ENCODE measurements at regions of chr13 and their contacts with region 1.

Region 1: GRCh38 chr13:21823949-21824348 is 153.1 kb downstream of the FGF9 start:
- DNase-seq: no peak
- H3K4me3 Mint-ChIP-seq: no peak overlapping the region
- H3K27ac Mint-ChIP-seq: no peak overlapping the region
- H3K4me1 Mint-ChIP-seq: peaks cover 18% of the 10 kb centered on the region
- H3K27me3 Mint-ChIP-seq: no peaks in the 10 kb centered on the region
- CTCF ChIP-seq: no peak

Region 2: DNA sequence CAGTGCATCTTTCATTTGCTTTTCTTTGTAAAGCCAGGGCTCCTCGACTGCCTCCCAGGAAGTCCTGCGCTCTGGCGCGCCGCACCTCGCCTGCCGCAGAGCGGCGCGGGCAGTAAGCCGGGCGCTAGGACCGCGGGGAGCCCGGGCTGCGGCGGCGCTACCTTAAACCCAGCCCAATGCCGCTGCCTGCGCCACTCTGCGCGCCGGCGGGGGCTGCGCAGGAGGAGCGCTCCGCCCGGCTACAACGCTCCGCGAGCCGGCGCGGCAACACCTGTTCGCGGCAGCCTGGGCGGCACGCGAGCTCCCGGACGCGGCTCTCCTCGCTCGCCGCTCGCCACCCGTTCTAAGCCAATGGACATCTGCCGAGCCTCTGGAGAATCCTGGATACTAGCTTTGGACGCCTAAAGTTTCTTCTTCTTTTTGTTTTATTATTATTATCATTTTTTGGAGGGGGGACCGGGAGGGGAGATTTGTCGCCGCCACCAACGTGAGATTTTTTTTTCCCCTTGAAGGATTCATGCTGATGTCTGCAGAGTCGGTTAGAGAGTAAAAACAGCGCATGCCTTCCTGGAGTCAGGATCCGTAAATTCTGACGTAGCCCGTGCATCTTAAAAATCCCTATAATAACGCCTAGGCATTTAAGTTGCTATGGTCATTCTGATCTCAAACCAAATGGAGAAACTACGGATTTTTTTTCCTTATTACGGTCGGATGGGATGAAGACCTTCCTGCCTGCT is 152.9 kb before region 1 on chr13 and contains the start of gene FGF9:
- CTCF ChIA-PET with region 1: no interaction called
- intact Hi-C with region 1: loop called (anchors 10 kb)
- DNase-seq: peak; percentile 68
- H3K4me3 Mint-ChIP-seq: peak within 1 kb of the TSS; percentile 84
- H3K27ac Mint-ChIP-seq: no peak within 1 kb of the TSS
- H3K4me1 Mint-ChIP-seq: peaks cover 10% of the 10 kb centered on the region
- H3K27me3 Mint-ChIP-seq: peaks cover 75% of the 10 kb centered on the region
- CTCF ChIP-seq: no peak
- total RNA-seq, gene FGF9: 0.32 TPM in 1 of 2 replicates, not detected in the other